Posterior vena cava (tissue), 2 donors: ENCODE measurements at regions of chr7 and their contacts with region 1.

Region 1: GRCh38 chr7:121547544-121548092 is 151.5 kb upstream of the FAM3C start:
- DNase-seq: no peak

Region 2: GRCh38 chr7:121360564-121360963 is 187.1 kb before region 1 on chr7:
- intact Hi-C with region 1: loop called in 1 of 2 experiments (anchors 2 kb)
- DNase-seq: no peak

Region 3: GRCh38 chr7:121369462-121369861 is 178.2 kb before region 1 on chr7:
- intact Hi-C with region 1: loop called in 1 of 2 experiments (anchors 2 kb)
- DNase-seq: no peak

Region 4: GRCh38 chr7:121519548-121520521 is 27.8 kb before region 1 on chr7:
- intact Hi-C with region 1: no loop called
- DNase-seq: no peak